Astrocyte of the cerebellum (primary cell): ENCODE measurements at regions of chr3 and their contacts with region 1.

Region 1: DNA sequence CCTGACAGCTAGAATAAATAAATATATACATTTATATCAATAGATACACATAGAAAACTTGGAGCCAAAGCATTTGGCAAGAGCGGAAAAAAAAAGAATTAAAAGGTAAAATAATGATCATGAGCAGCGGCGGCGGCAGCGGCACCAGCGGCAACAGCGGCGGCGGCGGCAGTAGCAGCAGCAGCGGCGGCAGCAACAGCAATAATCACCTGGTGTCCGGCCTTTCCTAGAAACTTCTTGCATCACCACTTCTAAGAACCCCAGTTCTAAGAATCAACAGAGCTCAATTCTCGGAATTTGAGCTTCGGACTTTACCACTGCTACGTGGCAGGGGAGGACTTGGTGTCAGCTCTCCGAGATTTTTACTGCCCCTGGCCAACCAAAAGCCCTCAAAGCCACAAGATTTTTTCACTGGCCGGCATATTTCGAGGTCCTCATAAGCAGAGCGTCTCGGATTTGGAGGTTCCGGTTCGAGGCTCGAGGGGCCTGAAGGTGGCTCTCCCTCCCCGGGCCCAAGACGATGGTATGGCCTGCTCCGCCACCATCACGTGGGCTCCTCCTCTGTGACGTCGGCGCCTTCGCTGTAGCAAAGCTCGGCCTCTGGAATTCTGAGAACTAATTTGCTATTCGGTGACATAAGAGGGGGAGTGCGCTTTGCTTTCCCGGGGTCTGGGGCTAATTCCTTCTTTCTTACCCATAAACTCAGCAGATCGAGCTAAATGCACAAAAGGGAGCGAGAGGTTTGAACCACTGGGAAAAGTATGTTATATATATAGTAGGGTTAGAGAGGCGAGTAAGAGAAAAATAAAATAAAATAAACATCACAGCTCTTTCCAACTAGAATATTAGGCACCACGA is at the start of gene BCL6:
- DNase-seq: peak; percentile 97
- H3K4me3 ChIP-seq: peak within 1 kb of the TSS; percentile 87
- CTCF ChIP-seq: no peak

Region 2: DNA sequence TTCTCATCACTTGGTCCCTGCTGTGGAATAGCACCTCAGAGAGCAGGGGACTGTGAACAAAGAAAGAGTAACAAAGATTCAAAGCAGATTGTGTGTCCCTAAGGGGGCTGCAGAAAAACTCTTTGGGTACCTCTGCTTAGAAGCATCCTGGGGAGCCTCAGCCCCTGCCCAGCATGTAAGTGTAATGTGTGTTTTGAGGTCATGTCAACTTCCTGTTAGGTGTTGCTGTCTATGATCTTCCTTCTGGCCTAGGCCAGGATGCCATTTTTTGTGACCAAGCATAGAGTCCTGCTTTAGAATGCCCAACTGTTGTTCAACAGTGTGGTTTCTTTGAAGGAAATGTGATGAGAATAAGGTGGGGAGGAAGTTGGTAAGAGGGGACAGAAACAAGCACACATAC is 77.0 kb after region 1 on chr3:
- in situ Hi-C with region 1: loop called (anchors 5 kb)
- DNase-seq: no peak
- H3K4me3 ChIP-seq: no peak overlapping the region
- CTCF ChIP-seq: no peak

Region 3: DNA sequence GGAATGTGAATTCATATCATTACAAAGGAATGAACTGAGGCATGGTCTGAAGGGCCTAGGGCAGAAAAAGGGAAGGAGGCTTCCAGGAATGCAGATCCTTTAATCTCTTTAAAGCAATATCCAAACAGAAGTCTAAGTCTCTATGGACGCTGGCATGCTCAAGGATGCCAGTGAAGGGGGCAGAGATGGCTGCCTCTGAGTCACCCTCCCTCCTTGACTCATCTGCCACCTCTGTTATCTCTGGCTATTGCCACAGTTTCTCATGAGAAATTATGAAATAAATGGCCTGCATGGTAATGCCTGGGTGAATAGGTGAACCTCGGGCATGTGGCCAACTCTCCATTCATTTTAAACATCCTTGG is 96.1 kb after region 1 on chr3:
- in situ Hi-C with region 1: no loop called
- DNase-seq: no peak
- H3K4me3 ChIP-seq: no peak overlapping the region
- CTCF ChIP-seq: no peak

Region 4: GRCh38 chr3:188133219-188133618 is 387.8 kb after region 1 on chr3:
- in situ Hi-C with region 1: loop called (anchors 25 kb)
- DNase-seq: no peak
- H3K4me3 ChIP-seq: no peak overlapping the region
- CTCF ChIP-seq: no peak

Region 5: DNA sequence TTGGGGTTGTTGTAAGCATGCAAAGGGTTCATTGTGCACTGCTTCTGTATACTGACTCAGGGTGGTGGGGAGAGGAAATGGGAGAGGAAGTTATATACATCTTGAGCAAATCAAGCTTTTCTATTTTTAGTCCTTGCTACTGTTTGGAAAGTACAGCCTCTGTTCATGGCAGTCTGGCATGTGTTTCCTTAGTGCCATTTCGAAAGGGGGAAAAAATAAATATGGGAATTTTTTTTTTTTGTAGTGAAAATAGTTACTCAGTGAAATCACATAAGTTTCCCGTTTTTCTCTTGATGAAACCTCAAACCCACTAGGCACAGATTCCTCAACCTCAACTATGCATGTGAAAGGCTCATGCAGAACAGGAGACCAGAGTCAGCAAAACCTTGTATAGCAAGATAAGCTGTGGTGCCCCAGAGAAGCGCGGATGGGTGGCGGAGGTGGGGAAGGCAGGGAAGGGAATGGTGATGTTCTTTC is 761.9 kb after region 1 on chr3:
- in situ Hi-C with region 1: loop called (anchors 25 kb)
- DNase-seq: peak; percentile 95
- H3K4me3 ChIP-seq: no peak overlapping the region
- CTCF ChIP-seq: no peak

Region 6: GRCh38 chr3:188796122-188796631 is 1050.7 kb after region 1 on chr3:
- in situ Hi-C with region 1: loop called (anchors 5 kb)
- DNase-seq: peak; percentile 86
- H3K4me3 ChIP-seq: no peak overlapping the region
- CTCF ChIP-seq: no peak